A673 (cell line): ENCODE measurements at regions of chr20 and their contacts with region 1.

Region 1: GRCh38 chr20:56629670-56630478 is 768 bp downstream of the TFAP2C start:
- DNase-seq: peak; percentile 49
- H3K4me3 ChIP-seq: peak overlapping the region; percentile 38
- H3K27ac ChIP-seq: no peak overlapping the region
- H3K4me1 ChIP-seq: peaks cover 13% of the 10 kb centered on the region
- H3K27me3 ChIP-seq: peaks cover 100% of the 10 kb centered on the region
- CTCF ChIP-seq: peak; percentile 57

Region 2: GRCh38 chr20:56974499-56975236 is 344.8 kb after region 1 on chr20:
- CTCF ChIA-PET with region 1: interaction called, 3 read pairs
- POLR2A ChIA-PET with region 1: no interaction called
- intact Hi-C with region 1: loop called (anchors 10 kb)
- DNase-seq: peak; percentile 61
- H3K4me3 ChIP-seq: no peak overlapping the region
- H3K27ac ChIP-seq: no peak overlapping the region
- H3K4me1 ChIP-seq: no peaks in the 10 kb centered on the region
- H3K27me3 ChIP-seq: peaks cover 79% of the 10 kb centered on the region
- CTCF ChIP-seq: peak; percentile 76

Region 3: DNA sequence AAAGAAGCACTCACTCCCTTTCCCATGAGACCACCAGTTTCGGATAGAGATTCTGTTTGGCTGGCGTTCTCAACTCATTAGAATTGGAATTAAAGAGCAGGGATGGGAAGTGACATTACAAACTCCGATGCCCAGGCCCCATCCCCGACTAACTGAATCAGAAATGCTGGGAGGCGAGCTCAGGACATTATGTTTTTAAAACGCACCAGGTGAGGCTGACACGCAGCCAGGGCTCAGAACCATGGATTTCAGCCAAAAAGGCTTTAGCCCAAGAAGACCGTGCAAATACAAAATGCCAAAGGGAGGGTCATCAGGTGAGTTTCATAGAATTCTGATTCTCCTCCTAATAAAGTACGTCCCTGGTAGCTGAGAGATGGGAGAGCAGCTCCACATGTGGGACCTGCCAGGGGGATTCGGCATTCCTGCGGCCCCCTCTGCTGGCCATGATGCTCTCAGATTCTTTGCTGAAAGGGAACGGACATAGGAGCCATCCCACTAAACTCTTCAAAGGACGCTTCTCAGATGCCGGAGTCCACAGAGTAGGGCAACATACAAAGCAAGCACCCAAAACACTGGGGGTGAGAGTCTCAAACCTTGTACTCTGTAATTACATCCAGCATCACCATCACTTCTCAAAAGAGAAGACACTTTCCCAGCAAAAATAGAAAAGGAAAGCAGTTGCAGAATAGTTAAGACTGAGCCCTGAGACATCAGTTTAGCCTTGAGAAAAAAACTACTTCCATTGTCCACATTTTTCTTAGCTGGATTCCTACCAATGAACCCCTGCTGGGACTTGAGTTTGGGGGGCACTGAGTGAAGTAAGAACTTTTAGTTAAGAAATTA is 431.4 kb after region 1 on chr20:
- CTCF ChIA-PET with region 1: interaction called, 4 read pairs
- POLR2A ChIA-PET with region 1: no interaction called
- intact Hi-C with region 1: loop called (anchors 2 kb)
- DNase-seq: peak; percentile 50
- H3K4me3 ChIP-seq: no peak overlapping the region
- H3K27ac ChIP-seq: no peak overlapping the region
- H3K4me1 ChIP-seq: no peaks in the 10 kb centered on the region
- H3K27me3 ChIP-seq: peaks cover 49% of the 10 kb centered on the region
- CTCF ChIP-seq: peak; percentile 63